Caco-2 (cell line): ENCODE measurements at regions of chr1 and their contacts with region 1.

Region 1: DNA sequence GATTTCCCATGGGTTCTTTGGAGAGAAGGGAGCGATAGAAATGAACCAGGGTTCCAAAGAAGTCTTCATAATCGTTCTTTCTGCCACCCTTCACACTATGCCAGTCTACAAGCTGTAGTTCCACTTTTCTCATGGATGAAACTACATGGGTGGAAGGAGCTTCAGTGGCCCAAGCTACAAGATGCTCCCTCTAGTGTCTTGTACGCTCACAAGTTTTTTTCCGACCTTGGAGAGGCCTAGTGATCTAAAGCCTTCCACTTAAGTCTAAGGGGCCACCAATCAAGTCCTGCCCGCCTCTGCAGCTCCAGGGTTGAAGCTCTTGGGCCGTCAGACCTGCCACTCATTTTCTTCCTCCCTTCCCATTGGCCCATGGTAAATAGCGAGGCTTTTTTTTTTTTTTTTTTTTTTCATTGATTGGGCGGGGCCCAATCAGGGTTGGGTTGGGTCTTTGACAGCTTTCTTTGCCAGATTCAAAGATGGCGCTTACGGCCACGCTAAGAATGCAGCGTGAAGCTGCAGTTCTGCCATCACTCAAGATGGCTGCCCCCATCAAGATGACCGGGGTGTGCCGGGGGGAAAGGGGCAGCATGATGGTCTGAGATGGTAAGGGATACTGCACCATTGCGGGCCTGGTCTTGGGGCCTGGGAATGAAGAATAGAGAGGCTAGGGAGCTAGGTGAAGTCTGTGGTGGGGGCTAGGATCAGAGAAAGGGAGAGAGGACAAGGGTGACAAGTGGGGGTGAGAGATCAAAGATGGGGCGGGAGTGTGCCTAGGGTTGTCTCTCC is at the start of gene TOMM40L:
- DNase-seq: peak; percentile 94 to 99
- H3K4me3 ChIP-seq: peak within 1 kb of the TSS; percentile 69
- H3K4me3 Mint-ChIP-seq: peak within 1 kb of the TSS; percentile 99
- H3K27ac Mint-ChIP-seq: peak within 1 kb of the TSS; percentile 97
- H3K4me1 ChIP-seq: peaks cover 48% of the 10 kb centered on the region
- H3K4me1 Mint-ChIP-seq: peaks cover 45% of the 10 kb centered on the region
- H3K27me3 ChIP-seq: no peaks in the 10 kb centered on the region
- H3K27me3 Mint-ChIP-seq: no peaks in the 10 kb centered on the region
- CTCF ChIP-seq: peak; percentile 31 to 67
- total RNA-seq, gene TOMM40L: 23.1 and 24.0 TPM in 2 replicates

Region 2: DNA sequence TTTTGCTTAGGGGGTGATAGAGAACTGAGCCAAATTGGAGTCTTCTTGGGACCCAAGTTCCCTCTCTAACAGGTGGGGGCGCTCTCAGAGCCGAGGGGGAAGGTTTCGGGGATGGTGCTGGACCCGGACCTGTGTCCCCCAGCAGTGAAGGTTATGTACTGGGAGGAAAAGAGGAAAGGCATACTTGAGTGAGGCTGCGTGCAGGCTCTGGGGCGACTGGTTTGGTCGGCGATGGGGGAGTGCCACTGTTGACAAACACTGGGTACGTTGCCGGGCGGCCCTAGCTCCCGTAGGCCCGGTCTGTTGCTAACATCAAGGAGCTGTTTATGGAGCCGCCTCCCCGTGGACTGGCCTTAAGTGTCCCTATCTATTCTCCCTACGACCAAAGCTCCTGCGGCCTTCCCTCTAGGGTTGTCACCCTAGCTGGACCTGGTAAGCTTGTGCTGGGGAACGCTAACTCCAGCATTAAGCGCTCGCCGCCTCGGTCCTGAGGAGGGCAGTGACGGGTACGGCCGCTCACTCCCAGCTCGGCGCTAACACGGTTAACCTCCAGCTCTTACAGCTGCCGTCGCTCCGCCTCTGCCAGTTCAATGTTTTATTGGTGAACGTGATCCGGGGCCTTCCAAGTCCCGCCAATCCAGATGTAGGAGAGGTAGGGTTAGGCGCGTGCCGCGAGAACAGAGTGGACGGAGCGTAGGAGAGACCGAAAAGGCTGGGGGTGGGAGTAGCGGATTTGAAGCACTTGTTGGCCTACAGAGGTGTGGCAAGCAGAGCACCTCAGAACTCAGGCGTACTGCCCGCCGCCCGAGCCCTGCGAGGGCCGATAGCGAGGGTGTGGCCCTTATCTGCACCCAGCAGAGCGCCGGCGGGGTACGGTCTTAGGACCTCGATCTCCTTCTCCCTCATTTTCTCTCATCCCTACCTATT is 59.7 kb before region 1 on chr1 and contains the start of gene PPOX:
- CTCF ChIA-PET with region 1: interaction called, 10 read pairs
- POLR2A ChIA-PET with region 1: no interaction called
- intact Hi-C with region 1: no loop called
- DNase-seq: peak; percentile 96 to 98
- H3K4me3 ChIP-seq: peak within 1 kb of the TSS; percentile 88
- H3K4me3 Mint-ChIP-seq: peak within 1 kb of the TSS; percentile 83
- H3K27ac Mint-ChIP-seq: peak within 1 kb of the TSS; percentile 81
- H3K4me1 ChIP-seq: peaks cover 3% of the 10 kb centered on the region; the same call in 1 of the 2 replicates
- H3K4me1 Mint-ChIP-seq: no peaks in the 10 kb centered on the region
- H3K27me3 ChIP-seq: no peaks in the 10 kb centered on the region
- H3K27me3 Mint-ChIP-seq: no peaks in the 10 kb centered on the region
- CTCF ChIP-seq: peak in 1 of 2 experiments; percentile 55
- total RNA-seq, gene PPOX: 25.0 and 25.4 TPM in 2 replicates

Region 3: DNA sequence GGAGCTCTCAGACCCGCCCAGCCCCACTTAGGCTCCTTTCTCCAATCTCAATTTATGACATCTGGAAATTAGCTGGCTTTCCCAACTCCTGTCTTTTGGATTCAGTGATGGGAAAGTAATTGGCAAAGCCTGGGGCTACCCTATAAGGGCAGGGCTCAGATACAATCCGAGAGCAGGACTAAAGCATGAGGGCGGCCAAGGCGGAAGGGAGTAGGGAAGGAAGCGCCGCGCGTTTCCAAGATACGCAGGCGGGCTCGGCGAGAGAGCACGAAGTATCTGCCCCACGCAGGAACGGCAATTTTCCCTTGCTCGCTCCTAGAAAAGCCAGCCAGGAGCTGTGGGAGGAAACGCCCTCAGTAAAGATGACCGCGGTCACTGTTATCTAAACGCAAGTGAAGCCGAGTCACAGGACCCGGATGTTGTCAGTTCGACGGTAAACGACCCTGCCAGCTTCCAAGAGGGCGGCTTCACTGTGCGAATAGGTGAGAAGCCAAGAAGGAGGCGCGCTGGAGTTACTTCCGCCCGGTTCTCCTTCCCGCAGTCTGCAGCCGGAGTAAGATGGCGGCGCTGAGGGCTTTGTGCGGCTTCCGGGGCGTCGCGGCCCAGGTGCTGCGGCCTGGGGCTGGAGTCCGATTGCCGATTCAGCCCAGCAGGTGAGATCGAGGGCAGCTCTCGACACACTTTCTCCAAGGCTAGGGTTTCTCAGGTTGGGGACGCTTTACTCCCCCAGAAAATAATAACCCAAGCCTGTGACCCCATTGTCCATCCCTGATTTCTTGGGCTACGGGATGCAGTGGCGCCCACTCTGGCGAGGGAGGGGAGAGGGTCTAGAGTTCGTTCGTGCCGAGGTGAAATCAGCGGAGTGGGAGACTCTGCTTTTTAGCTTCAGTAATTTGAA is 23.6 kb before region 1 on chr1 and contains the start of gene NDUFS2:
- CTCF ChIA-PET with region 1: interaction called, 34 read pairs
- POLR2A ChIA-PET with region 1: interaction called, 41 read pairs
- intact Hi-C with region 1: no loop called
- DNase-seq: peak; percentile 95 to 98
- H3K4me3 ChIP-seq: peak within 1 kb of the TSS; percentile 58
- H3K4me3 Mint-ChIP-seq: peak within 1 kb of the TSS; percentile 83
- H3K27ac Mint-ChIP-seq: peak within 1 kb of the TSS; percentile 85
- H3K4me1 ChIP-seq: peaks cover 13% of the 10 kb centered on the region; the same call in 1 of the 2 replicates
- H3K4me1 Mint-ChIP-seq: peaks cover 20% of the 10 kb centered on the region
- H3K27me3 ChIP-seq: no peaks in the 10 kb centered on the region
- H3K27me3 Mint-ChIP-seq: no peaks in the 10 kb centered on the region
- CTCF ChIP-seq: peak in 1 of 2 experiments; percentile 61
- total RNA-seq, gene NDUFS2: 110 and 115 TPM in 2 replicates

Region 4: GRCh38 chr1:161258439-161259344 is 33.0 kb after region 1 on chr1 and contains the start of gene PCP4L1:
- CTCF ChIA-PET with region 1: interaction called, 3 read pairs
- POLR2A ChIA-PET with region 1: interaction called, 21 read pairs
- intact Hi-C with region 1: no loop called
- DNase-seq: peak; percentile 59 to 70
- H3K4me3 ChIP-seq: peak within 1 kb of the TSS; percentile 39
- H3K4me3 Mint-ChIP-seq: peak within 1 kb of the TSS; percentile 47
- H3K27ac Mint-ChIP-seq: no peak within 1 kb of the TSS
- H3K4me1 ChIP-seq: peaks cover 13% of the 10 kb centered on the region; the same call in 1 of the 2 replicates
- H3K4me1 Mint-ChIP-seq: peaks cover 24% of the 10 kb centered on the region
- H3K27me3 ChIP-seq: no peaks in the 10 kb centered on the region
- H3K27me3 Mint-ChIP-seq: no peaks in the 10 kb centered on the region
- CTCF ChIP-seq: no peak
- total RNA-seq, gene PCP4L1: 2.5 and 3.3 TPM in 2 replicates

Region 5: DNA sequence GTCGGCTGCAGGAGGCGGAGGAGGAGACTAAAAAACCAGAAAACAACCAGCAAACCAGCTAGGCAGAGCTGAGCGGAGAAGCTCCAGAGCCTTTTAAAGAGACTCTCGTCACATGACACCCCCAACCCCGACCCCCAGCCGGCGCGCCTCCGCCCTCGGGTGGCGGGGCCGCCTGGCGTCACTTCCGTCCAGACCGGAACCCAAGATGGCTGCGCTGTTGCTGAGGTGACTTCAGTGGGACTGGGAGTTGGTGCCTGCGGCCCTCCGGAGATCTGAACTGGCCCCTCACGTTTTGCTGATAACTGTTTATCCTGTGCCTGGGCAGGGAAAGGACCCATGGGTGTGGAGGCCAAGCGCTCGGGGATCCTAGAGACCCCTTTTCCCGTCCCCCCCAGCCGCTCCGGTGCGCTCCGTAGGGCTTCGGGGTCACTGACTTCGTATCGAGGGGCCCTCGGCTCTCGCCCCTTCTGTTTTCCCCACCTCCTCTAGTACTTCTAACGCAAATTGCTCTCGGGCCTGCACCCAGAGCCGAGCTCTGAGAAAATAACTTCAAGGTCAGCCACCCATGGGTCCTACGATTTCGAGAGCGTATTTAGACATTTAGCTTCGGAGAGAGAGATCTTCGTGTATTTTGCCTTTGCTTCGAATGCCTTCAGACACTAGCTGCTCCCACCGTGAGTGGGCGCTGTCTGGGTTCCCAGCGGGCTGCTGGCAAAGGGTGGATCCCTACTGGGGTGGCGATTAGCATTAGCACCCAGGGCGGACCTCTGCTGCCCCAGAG is 88.7 kb after region 1 on chr1 and contains the start of gene SDHC:
- CTCF ChIA-PET with region 1: interaction called, 12 read pairs
- POLR2A ChIA-PET with region 1: interaction called, 22 read pairs
- intact Hi-C with region 1: loop called (anchors 1 kb)
- DNase-seq: peak; percentile 88 to 92
- H3K4me3 ChIP-seq: peak within 1 kb of the TSS; percentile 66
- H3K4me3 Mint-ChIP-seq: peak within 1 kb of the TSS; percentile 91
- H3K27ac Mint-ChIP-seq: peak within 1 kb of the TSS; percentile 94
- H3K4me1 ChIP-seq: peaks cover 4% of the 10 kb centered on the region; the same call in 1 of the 2 replicates
- H3K4me1 Mint-ChIP-seq: no peaks in the 10 kb centered on the region
- H3K27me3 ChIP-seq: no peaks in the 10 kb centered on the region
- H3K27me3 Mint-ChIP-seq: no peaks in the 10 kb centered on the region
- CTCF ChIP-seq: peak; percentile 15 to 63
- total RNA-seq, gene SDHC: 261 and 268 TPM in 2 replicates

Region 6: DNA sequence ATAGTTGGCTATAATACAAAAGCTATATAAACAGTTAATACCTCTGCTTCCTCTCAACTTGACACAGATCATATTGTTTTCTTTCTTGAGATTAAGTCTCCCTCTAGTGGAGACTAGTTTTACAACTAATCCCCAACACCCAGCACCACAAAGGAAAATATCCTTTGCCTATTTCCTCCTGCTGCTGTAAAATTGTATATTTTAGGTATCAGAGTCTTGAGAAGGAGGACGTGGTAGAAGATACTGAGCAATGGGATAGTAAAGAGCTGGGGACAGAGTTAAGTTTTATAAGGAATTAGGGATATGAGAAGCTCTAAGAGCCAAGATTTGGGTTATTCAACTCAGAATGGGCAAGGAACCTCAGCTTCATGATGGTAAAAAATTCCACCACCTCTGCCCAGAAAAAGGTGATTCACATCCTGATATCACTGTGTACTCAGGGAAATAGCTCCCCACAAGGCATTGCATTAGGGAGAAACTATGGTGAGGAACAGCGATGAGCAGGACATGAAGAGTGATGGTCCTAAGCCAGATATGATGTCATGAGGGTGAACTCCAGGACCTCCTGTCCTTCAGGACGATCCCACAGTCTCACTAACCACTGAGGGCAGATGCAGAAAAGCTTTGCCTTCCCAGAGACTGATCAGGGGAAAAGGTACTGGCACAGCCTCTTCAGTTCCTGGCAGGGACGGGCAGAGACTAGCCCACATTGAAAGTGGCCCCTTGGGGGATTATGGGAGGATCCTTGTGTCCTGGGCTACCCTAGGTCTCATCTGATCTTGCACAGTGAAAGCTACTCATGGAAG is 156.7 kb after region 1 on chr1:
- CTCF ChIA-PET with region 1: interaction called, 29 read pairs
- POLR2A ChIA-PET with region 1: interaction called, 3 read pairs
- intact Hi-C with region 1: no loop called
- DNase-seq: peak in 1 of 2 experiments; percentile 45
- H3K4me3 ChIP-seq: no peak overlapping the region
- H3K4me3 Mint-ChIP-seq: no peak overlapping the region
- H3K27ac Mint-ChIP-seq: no peak overlapping the region
- H3K4me1 ChIP-seq: peaks cover 8% of the 10 kb centered on the region; the same call in 1 of the 2 replicates
- H3K4me1 Mint-ChIP-seq: no peaks in the 10 kb centered on the region
- H3K27me3 ChIP-seq: no peaks in the 10 kb centered on the region
- H3K27me3 Mint-ChIP-seq: no peaks in the 10 kb centered on the region
- CTCF ChIP-seq: peak; percentile 43 to 54

Region 7: DNA sequence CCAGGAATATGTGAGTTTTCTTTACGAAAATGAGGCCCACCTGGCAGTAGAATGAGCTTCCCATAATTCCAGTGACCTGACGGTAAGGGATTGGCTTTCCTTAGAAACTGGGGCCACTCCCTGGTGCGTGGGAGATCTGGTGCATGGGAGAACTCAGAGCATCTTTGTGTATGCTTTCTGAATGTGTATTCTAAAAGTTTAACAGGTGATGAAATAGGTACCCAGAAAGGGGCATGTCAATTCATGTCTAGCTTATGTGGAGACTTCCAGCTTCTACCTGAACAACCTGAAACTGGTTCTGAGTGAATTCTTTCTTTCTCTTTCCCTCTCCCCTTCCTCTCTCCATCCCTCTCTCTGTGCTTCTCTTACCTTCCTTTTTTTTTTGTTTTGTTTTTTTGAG is 466.1 kb after region 1 on chr1:
- CTCF ChIA-PET with region 1: no interaction called
- POLR2A ChIA-PET with region 1: no interaction called
- intact Hi-C with region 1: no loop called
- DNase-seq: no peak
- H3K4me3 ChIP-seq: no peak overlapping the region
- H3K4me3 Mint-ChIP-seq: no peak overlapping the region
- H3K27ac Mint-ChIP-seq: no peak overlapping the region
- H3K4me1 ChIP-seq: no peaks in the 10 kb centered on the region
- H3K4me1 Mint-ChIP-seq: no peaks in the 10 kb centered on the region
- H3K27me3 ChIP-seq: no peaks in the 10 kb centered on the region
- H3K27me3 Mint-ChIP-seq: peaks cover 24% of the 10 kb centered on the region
- CTCF ChIP-seq: no peak